ENCODE measurements at regions of chr11 and their contacts with region 1.

Region 1: GRCh38 chr11:108135845-108136544 is 14.6 kb downstream of the ACAT1 start:
- DNase-seq: peak; percentile 60
- ATAC-seq: peak; percentile 60
- H3K4me3 Mint-ChIP-seq: no peak overlapping the region
- H3K27ac Mint-ChIP-seq: peak overlapping the region; percentile 80
- H3K4me1 Mint-ChIP-seq: peaks cover 26% of the 10 kb centered on the region
- H3K27me3 Mint-ChIP-seq: no peaks in the 10 kb centered on the region

Region 2: GRCh38 chr11:108302121-108302785 is 166.3 kb after region 1 on chr11:
- CTCF ChIA-PET with region 1: no interaction called
- POLR2A ChIA-PET with region 1: no interaction called
- intact Hi-C with region 1: loop called in 1 of 2 experiments (anchors 2 kb)
- DNase-seq: no peak
- ATAC-seq: peak; percentile 94
- H3K4me3 Mint-ChIP-seq: no peak overlapping the region
- H3K27ac Mint-ChIP-seq: no peak overlapping the region
- H3K4me1 Mint-ChIP-seq: peaks cover 33% of the 10 kb centered on the region
- H3K27me3 Mint-ChIP-seq: no peaks in the 10 kb centered on the region

Measured in activated CD4-positive, alpha-beta T cell treated with anti-CD3 and anti-CD28 coated beads for 36 hours (primary cell).